Natural killer cell (primary cell): ENCODE measurements at regions of chr13 and their contacts with region 1.

Region 1: DNA sequence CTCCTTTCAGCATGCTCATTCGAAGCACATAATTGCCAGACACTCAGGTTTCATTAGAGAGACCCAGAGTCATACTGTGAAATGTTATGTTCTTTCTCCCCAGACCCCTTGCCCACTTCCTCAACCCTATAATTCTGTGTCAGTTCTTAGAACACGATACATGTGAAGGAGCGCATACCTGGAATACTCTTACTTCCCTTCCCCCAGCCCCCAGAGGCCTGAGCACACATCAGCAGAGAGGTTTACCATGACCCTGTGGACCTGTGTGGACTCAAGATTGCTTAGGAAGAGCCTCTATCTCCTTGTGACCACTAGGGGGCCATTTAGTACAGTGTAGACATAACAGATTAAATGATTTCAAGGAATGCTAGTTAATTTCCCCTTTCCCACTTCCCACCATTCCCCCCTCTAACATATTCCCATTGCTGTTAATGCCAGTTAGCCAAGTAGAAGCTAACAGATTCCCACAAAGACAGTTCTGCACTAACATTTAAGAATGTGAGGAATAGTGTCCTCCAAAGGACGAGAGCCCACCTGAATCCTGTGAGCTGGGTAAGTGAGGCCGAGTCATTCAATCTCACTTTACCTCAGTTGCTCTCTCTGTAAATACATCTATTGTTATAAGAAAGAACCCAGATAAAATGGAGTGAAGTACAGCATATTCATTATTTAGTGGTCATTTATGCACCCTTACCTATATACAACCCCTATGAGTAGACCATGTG is 154.2 kb upstream of the MAB21L1 start:
- DNase-seq: no peak
- ATAC-seq: peak in 2 of 3 donors; percentile 68
- H3K4me3 ChIP-seq: no peak overlapping the region
- H3K4me3 Mint-ChIP-seq: no peak overlapping the region
- H3K27ac ChIP-seq: no peak overlapping the region
- H3K27ac Mint-ChIP-seq: no peak overlapping the region
- H3K4me1 ChIP-seq: no peaks in the 10 kb centered on the region
- H3K4me1 Mint-ChIP-seq: no peaks in the 10 kb centered on the region
- H3K27me3 ChIP-seq: no peaks in the 10 kb centered on the region
- H3K27me3 Mint-ChIP-seq: no peaks in the 10 kb centered on the region
- CTCF ChIP-seq: peak; percentile 62

Region 2: DNA sequence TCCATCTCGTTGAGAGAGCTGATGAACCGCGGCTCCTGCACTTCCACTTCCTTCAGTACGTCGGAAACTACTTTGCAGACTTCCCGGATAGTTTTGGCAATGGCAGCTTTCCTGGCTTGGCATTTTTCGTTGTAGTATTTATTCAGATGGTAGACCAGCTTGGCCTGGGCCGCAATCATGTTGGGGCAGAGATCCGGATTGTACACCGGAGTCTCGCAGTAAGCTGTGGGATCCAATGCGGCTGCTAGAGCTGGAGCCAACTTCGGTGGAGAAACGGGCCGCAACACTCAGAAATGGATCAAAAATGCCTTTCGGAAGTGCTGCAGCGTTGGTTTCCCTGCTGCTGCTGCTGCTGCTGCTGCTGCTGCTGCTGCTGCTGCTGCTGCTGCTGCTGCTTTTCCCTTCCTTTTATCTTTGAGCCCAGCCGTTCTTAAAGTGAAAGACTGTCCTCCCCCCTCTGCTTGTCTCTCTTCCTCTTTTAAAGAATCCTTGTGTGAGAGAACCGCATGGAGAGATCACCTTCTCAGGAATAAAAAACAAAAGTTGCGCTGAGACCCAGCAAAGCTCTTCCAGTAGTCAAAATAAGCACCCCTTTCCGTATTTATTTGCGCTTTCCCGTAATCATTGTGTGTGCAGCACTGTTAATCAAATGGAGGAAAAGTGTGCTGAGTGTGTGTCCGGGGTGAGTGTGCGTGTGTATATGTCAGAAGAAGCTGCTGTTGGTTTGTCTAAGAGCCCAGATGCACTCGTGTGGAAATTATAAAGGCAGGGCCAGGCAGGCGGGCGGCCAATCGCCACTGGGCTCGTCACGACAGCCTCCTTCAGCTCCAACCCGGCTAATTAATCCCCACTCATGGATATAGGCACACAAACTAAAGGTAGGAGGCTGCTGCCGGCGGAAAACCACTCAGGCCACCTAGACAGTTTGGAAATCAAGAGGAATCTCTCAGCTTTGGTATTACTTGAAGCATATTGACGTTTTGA is 154.5 kb before region 1 on chr13 and contains the start of gene MAB21L1:
- intact Hi-C with region 1: loop called (anchors 2 kb)
- DNase-seq: peak in 1 of 2 donors; percentile 10
- ATAC-seq: peak in 1 of 3 donors; percentile 25
- H3K4me3 ChIP-seq: peak within 1 kb of the TSS; percentile 29
- H3K4me3 Mint-ChIP-seq: peak within 1 kb of the TSS; percentile 93
- H3K27ac ChIP-seq: no peak within 1 kb of the TSS
- H3K27ac Mint-ChIP-seq: peak within 1 kb of the TSS; percentile 62 to 74
- H3K4me1 ChIP-seq: peaks cover 32% of the 10 kb centered on the region
- H3K4me1 Mint-ChIP-seq: peaks cover 36% of the 10 kb centered on the region in 2 donors
- H3K27me3 ChIP-seq: peaks cover 76% of the 10 kb centered on the region
- H3K27me3 Mint-ChIP-seq: peaks cover 60 to 65% of the 10 kb centered on the region in 2 donors
- CTCF ChIP-seq: no peak
- total RNA-seq, gene MAB21L1: 0.20 TPM in 1 of 3 donors, not detected in the others

Region 3: DNA sequence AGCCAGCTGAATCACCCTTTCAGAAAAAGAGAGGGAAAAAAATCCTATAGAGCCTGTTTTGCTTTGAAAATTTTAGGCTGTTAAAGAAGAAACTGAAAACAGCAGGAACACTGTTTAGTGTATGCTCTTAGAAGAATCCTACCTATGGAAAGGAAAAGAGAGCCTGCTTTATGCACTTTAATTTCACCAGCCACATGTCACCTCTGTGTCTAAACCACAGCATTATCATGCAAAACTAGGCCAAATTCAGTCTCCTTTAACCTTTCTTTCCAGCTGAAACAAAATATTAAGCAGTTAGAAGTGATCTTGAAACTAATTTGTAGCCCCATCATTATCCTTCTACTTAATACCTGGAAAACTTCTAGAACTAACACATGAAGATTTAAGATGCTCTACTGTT is 57.1 kb before region 1 on chr13:
- intact Hi-C with region 1: loop called (anchors 5 kb)
- DNase-seq: no peak
- ATAC-seq: peak in 2 of 3 donors; percentile 31 to 50
- H3K4me3 ChIP-seq: no peak overlapping the region
- H3K4me3 Mint-ChIP-seq: no peak overlapping the region
- H3K27ac ChIP-seq: no peak overlapping the region
- H3K27ac Mint-ChIP-seq: peak overlapping the region; percentile 63 to 69
- H3K4me1 ChIP-seq: no peaks in the 10 kb centered on the region
- H3K4me1 Mint-ChIP-seq: peaks cover 9 to 18% of the 10 kb centered on the region in 2 donors
- H3K27me3 ChIP-seq: no peaks in the 10 kb centered on the region
- H3K27me3 Mint-ChIP-seq: no peaks in the 10 kb centered on the region
- CTCF ChIP-seq: no peak